CD8-positive, alpha-beta memory T cell (primary cell): ENCODE measurements at regions of chr12 and their contacts with region 1.

Region 1: DNA sequence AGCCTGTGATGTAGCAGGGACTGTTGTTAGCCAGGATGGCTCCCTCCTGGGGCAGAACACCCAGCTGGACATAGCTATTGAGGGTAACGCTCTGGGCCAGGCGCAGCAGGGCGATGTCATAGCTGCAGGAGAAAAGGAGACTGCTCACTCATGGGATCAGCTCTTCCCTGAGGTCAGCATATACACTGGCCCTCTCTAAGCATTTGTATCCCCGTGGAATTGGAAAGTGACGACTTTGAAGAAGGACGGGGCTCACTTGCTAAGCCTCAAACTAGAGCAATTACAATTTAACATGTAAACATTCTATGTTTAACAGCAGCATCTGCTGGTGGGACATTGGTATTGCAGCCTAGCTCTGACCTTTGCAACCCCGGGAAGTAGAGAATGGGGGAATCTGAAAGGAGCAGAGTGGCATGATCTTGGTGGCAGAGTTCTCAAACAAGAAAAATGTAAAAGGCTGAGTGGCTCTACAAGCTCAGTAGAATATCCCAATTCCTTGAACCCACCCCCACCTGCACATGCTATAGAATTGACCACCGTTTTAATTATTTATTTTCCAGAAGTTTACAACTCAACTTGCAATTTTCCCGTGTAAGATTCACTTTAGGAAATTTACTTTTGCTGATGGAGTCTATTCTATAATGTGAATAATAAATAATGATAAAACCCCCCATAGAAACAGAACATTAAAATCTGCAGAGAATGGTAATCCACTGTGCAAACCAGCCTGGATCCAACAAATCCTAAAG is 5.0 kb downstream of the CELA1 start:
- DNase-seq: peak; percentile 39 to 77 (median 67)
- H3K4me3 ChIP-seq: no peak overlapping the region
- H3K4me3 Mint-ChIP-seq: peak overlapping the region in 6 of 7 donors; percentile 24 to 77 (median 58)
- H3K27ac ChIP-seq: no peak overlapping the region
- H3K27ac Mint-ChIP-seq: peak overlapping the region in 7 of 8 donors; percentile 5 to 92 (median 85)
- H3K4me1 ChIP-seq: peaks cover 9% of the 10 kb centered on the region
- H3K4me1 Mint-ChIP-seq: peaks cover 7 to 11% (median 7%) of the 10 kb centered on the region in 3 donors
- H3K27me3 ChIP-seq: no peaks in the 10 kb centered on the region
- H3K27me3 Mint-ChIP-seq: no peaks in the 10 kb centered on the region

Region 2: DNA sequence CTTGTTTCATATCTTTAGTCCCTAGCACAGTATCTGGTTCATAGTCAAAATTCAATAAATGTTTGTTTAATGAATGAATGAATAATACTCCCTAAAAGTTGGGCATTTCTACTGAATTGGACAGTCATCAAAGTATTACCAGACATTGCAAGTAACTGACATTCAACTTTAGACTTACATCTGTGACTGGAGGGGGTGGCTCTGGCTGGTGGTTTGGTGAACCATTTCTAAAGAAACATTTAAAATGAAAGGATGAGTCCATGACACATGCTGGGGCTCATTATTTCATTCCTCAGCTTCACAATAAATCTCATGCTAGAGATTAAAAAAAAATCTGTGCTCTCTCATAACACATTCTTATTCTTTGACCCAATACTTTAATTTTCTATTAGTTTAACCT is 237.5 kb before region 1 on chr12:
- CTCF ChIA-PET with region 1: no interaction called
- POLR2A ChIA-PET with region 1: no interaction called
- DNase-seq: no peak
- H3K4me3 ChIP-seq: no peak overlapping the region
- H3K4me3 Mint-ChIP-seq: no peak overlapping the region
- H3K27ac ChIP-seq: no peak overlapping the region
- H3K27ac Mint-ChIP-seq: peak overlapping the region in 2 of 8 donors; percentile 11 to 54
- H3K4me1 ChIP-seq: no peaks in the 10 kb centered on the region
- H3K4me1 Mint-ChIP-seq: no peaks in the 10 kb centered on the region
- H3K27me3 ChIP-seq: no peaks in the 10 kb centered on the region
- H3K27me3 Mint-ChIP-seq: no peaks in the 10 kb centered on the region

Region 3: DNA sequence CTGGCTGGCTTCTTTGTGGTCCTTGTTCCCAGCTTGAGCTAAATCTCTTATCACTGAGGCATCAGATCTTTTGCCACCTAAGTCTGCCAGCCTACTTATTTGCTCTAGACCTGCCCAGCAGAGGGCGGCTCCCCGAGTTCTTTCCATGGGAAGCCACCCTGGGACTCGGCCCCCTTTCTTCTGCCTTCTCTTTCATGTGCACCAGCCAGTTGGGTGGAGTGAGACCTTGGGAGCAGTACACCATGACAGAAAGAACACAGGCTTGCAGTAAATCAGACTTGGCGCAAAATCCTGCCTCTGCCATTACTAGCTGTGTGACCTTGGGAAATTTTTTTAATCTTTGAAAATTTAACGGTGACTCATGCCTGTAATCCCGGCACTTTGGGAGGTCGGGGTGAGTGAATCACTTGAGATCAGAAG is 78.7 kb before region 1 on chr12:
- CTCF ChIA-PET with region 1: interaction called, 64 read pairs
- POLR2A ChIA-PET with region 1: no interaction called
- DNase-seq: peak in 1 of 5 donors; percentile 54
- H3K4me3 ChIP-seq: no peak overlapping the region
- H3K4me3 Mint-ChIP-seq: no peak overlapping the region
- H3K27ac ChIP-seq: no peak overlapping the region
- H3K27ac Mint-ChIP-seq: peak overlapping the region in 2 of 8 donors; percentile 55 to 63
- H3K4me1 ChIP-seq: peaks cover 6% of the 10 kb centered on the region
- H3K4me1 Mint-ChIP-seq: peaks cover 18 to 29% (median 21%) of the 10 kb centered on the region in 3 donors
- H3K27me3 ChIP-seq: no peaks in the 10 kb centered on the region
- H3K27me3 Mint-ChIP-seq: no peaks in the 10 kb centered on the region

Region 4: GRCh38 chr12:51293696-51294095 is 47.7 kb before region 1 on chr12:
- CTCF ChIA-PET with region 1: interaction called, 20 read pairs
- POLR2A ChIA-PET with region 1: no interaction called
- DNase-seq: no peak
- H3K4me3 ChIP-seq: no peak overlapping the region
- H3K4me3 Mint-ChIP-seq: no peak overlapping the region
- H3K27ac ChIP-seq: no peak overlapping the region
- H3K27ac Mint-ChIP-seq: peak overlapping the region in 5 of 8 donors; percentile 14 to 88 (median 32)
- H3K4me1 ChIP-seq: peaks cover 8% of the 10 kb centered on the region
- H3K4me1 Mint-ChIP-seq: peaks cover 14 to 22% (median 17%) of the 10 kb centered on the region in 3 donors
- H3K27me3 ChIP-seq: no peaks in the 10 kb centered on the region
- H3K27me3 Mint-ChIP-seq: no peaks in the 10 kb centered on the region

Region 5: GRCh38 chr12:51320695-51321320 is 20.6 kb before region 1 on chr12:
- CTCF ChIA-PET with region 1: interaction called, 67 read pairs
- POLR2A ChIA-PET with region 1: interaction called, 9 read pairs
- DNase-seq: peak in 2 of 5 donors; percentile 5 to 16
- H3K4me3 ChIP-seq: peak overlapping the region; percentile 58
- H3K4me3 Mint-ChIP-seq: peak overlapping the region; percentile 81 to 99 (median 95)
- H3K27ac ChIP-seq: peak overlapping the region; percentile 5
- H3K27ac Mint-ChIP-seq: peak overlapping the region; percentile 81 to 100 (median 95)
- H3K4me1 ChIP-seq: peaks cover 66% of the 10 kb centered on the region
- H3K4me1 Mint-ChIP-seq: peaks cover 72 to 94% (median 90%) of the 10 kb centered on the region in 3 donors
- H3K27me3 ChIP-seq: no peaks in the 10 kb centered on the region
- H3K27me3 Mint-ChIP-seq: peaks cover 0 to 4% of the 10 kb centered on the region in 2 donors

Region 6: DNA sequence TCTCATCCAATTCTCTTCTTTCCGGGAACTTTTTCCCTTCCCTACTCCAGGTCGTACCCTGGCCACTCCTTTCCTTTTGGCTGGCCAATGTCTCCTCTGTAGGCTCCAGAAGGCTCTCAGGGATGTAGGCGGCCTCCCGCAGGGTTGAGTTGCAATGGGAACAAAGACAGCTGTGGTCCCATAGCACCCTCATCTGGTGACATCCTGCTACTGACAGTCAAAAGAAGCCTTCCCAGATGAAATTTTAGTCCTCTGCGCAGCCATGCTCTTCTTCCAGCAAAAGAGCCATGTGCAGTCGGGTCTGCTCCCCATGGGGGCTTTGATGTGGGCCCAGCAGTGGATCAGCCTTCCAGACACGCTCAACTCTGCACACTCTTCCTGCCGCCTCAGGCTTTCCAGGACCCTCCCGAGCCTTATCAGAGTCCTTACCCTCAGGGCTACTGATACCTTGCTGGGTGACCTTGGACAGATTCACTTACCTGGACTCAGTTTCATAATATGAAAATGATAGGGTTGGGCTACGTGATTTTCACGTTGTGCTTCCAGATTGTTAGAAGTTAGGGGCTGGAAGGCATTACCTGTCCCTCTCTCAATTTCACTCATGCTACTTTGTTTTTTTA is 10.6 kb after region 1 on chr12:
- CTCF ChIA-PET with region 1: interaction called, 34 read pairs
- POLR2A ChIA-PET with region 1: no interaction called
- DNase-seq: peak in 4 of 5 donors; percentile 30 to 58 (median 41)
- H3K4me3 ChIP-seq: no peak overlapping the region
- H3K4me3 Mint-ChIP-seq: no peak overlapping the region
- H3K27ac ChIP-seq: no peak overlapping the region
- H3K27ac Mint-ChIP-seq: peak overlapping the region in 3 of 8 donors; percentile 23 to 43 (median 40)
- H3K4me1 ChIP-seq: no peaks in the 10 kb centered on the region
- H3K4me1 Mint-ChIP-seq: peaks cover 0 to 4% (median 3%) of the 10 kb centered on the region in 3 donors
- H3K27me3 ChIP-seq: no peaks in the 10 kb centered on the region
- H3K27me3 Mint-ChIP-seq: no peaks in the 10 kb centered on the region